ENCODE measurements at regions of chr7 and their contacts with region 1.

Region 1: GRCh38 chr7:100965723-100966541 is 3.4 kb upstream of the MUC12 start:
- DNase-seq: peak; percentile 94 to 99
- H3K4me3 ChIP-seq: peak overlapping the region; percentile 57
- H3K4me3 Mint-ChIP-seq: peak overlapping the region; percentile 78
- H3K27ac Mint-ChIP-seq: peak overlapping the region; percentile 60
- H3K4me1 ChIP-seq: peaks cover 13% of the 10 kb centered on the region
- H3K4me1 Mint-ChIP-seq: peaks cover 17% of the 10 kb centered on the region
- H3K27me3 ChIP-seq: no peaks in the 10 kb centered on the region
- H3K27me3 Mint-ChIP-seq: peaks cover 9% of the 10 kb centered on the region
- CTCF ChIP-seq: peak; percentile 96 to 98

Region 2: DNA sequence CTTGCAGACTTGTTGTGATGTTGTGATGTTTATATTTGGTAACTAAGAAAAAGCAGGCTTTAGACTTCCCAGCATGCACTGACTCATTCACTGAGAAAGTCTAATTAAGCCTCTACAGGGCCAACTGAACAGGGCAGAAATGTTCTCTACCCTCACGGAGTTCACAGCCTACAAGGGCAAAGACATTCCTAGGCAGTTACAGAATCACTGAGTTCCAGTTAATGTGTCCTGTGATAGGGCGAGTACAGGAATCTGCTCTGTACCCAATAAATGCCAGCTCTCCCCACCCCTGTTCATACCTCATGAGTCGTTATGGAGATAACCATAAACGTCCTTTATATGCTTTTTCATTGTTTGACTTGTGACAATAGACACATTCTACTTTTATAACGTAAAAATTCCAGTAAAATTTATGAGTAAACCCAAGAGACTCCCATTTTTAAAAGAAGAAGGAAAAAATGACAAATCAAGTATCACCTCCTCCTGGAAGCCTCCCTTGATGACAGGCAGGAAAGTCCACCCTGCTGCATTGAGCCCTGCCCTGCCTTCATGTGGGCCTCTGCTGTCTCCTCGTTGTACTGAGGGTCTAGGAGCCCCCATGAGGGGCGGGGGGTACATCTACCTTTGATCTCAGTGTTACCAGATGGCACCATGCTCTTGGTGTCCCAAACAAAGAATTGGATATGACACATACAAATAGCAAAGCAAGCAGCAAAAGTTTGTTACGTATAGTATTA is 17.7 kb after region 1 on chr7:
- CTCF ChIA-PET with region 1: no interaction called
- POLR2A ChIA-PET with region 1: no interaction called
- intact Hi-C with region 1: no loop called
- DNase-seq: no peak
- H3K4me3 ChIP-seq: no peak overlapping the region
- H3K4me3 Mint-ChIP-seq: no peak overlapping the region
- H3K27ac Mint-ChIP-seq: no peak overlapping the region
- H3K4me1 ChIP-seq: no peaks in the 10 kb centered on the region
- H3K4me1 Mint-ChIP-seq: peaks cover 6% of the 10 kb centered on the region
- H3K27me3 ChIP-seq: no peaks in the 10 kb centered on the region
- H3K27me3 Mint-ChIP-seq: peaks cover 3% of the 10 kb centered on the region
- CTCF ChIP-seq: no peak

Region 3: GRCh38 chr7:101059627-101059942 is 93.7 kb after region 1 on chr7:
- CTCF ChIA-PET with region 1: interaction called, 3 read pairs
- POLR2A ChIA-PET with region 1: no interaction called
- intact Hi-C with region 1: loop called (anchors 1 kb)
- DNase-seq: no peak
- H3K4me3 ChIP-seq: no peak overlapping the region
- H3K4me3 Mint-ChIP-seq: no peak overlapping the region
- H3K27ac Mint-ChIP-seq: no peak overlapping the region
- H3K4me1 ChIP-seq: no peaks in the 10 kb centered on the region
- H3K4me1 Mint-ChIP-seq: no peaks in the 10 kb centered on the region
- H3K27me3 ChIP-seq: no peaks in the 10 kb centered on the region; the same call in 1 of the 2 replicates
- H3K27me3 Mint-ChIP-seq: peaks cover 24% of the 10 kb centered on the region
- CTCF ChIP-seq: no peak

Region 4: GRCh38 chr7:101077303-101078089 is 111.6 kb after region 1 on chr7:
- CTCF ChIA-PET with region 1: interaction called, 12 read pairs
- POLR2A ChIA-PET with region 1: no interaction called
- intact Hi-C with region 1: loop called (anchors 5 kb)
- DNase-seq: peak; percentile 87 to 91
- H3K4me3 ChIP-seq: no peak overlapping the region
- H3K4me3 Mint-ChIP-seq: no peak overlapping the region
- H3K27ac Mint-ChIP-seq: no peak overlapping the region
- H3K4me1 ChIP-seq: no peaks in the 10 kb centered on the region
- H3K4me1 Mint-ChIP-seq: peaks cover 5% of the 10 kb centered on the region
- H3K27me3 ChIP-seq: no peaks in the 10 kb centered on the region
- H3K27me3 Mint-ChIP-seq: peaks cover 10% of the 10 kb centered on the region
- CTCF ChIP-seq: peak; percentile 69 to 96